Gastrocnemius medialis (tissue), 4 donors: ENCODE measurements at regions of chr19 and their contacts with region 1.

Region 1: DNA sequence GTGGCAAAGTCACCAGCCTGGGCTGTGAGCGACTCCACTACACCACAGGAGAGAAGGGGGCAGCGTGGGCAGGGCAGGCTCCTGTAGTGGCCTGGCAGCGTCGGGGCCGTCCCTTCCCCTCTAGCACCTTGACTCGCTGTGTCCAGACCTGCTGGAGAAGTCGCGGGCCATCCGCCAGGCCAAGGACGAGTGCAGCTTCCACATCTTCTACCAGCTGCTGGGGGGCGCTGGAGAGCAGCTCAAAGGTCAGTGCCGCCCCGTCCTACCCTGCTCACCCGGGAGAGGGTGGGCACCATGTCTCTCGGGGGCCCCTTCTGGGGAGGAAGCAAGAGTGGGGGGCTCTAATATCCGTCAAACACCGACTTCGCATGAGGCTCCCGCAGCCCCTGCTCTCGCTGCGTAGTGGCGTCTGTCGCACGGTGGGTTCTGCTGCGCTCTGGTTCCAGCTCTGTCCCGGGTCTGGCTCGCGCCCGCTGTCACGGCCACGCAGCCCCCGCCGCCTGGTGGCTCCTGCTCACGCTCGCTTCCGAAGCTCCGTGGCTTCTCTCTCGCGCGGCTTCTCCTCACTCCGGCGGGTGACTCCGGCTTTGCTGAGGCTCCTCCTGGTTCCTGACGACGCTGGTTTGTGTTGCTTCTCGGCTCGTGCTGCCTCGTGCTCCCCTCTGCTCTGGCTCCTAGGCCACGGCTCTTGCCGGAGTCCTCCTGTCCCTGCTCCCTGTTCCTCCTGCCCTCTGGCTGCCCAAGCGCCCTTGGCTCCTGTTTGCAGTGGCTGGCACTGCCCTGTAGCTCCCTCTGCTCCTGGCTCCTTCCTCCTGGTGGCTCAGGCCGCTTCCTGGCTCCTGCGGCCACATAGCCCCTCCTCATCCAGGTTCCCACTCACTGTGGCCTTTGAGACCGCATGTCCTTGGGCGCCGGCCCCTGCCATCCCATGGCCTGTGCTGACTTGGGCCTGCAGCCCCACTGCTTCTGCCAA is 27.2 kb downstream of the MYH14 start:
- DNase-seq: peak in 1 of 2 donors; percentile 38
- ATAC-seq: no peak
- H3K4me3 ChIP-seq: no peak overlapping the region
- H3K27ac ChIP-seq: peak overlapping the region; percentile 17 to 91 (median 57)
- H3K4me1 ChIP-seq: peaks cover 14 to 20% of the 10 kb centered on the region in 2 donors
- H3K27me3 ChIP-seq: no peaks in the 10 kb centered on the region
- CTCF ChIP-seq: no peak
- POLR2A ChIP-seq: no peak

Region 2: GRCh38 chr19:50147462-50148423 is 82.9 kb before region 1 on chr19:
- in situ Hi-C with region 1: no loop called
- intact Hi-C with region 1: loop called (anchors 1 kb)
- DNase-seq: peak; percentile 76 to 85
- ATAC-seq: peak; percentile 98 to 99
- H3K4me3 ChIP-seq: peak overlapping the region; percentile 74 to 88 (median 78)
- H3K27ac ChIP-seq: peak overlapping the region; percentile 82 to 92 (median 86)
- H3K4me1 ChIP-seq: peaks cover 4 to 5% of the 10 kb centered on the region in 2 donors
- H3K27me3 ChIP-seq: no peaks in the 10 kb centered on the region
- CTCF ChIP-seq: peak; percentile 52 to 83 (median 65)
- POLR2A ChIP-seq: peak; percentile 19 to 26